Activated CD4-positive, alpha-beta T cell treated with anti-CD3 and anti-CD28 coated beads, Interleukin-2, amount 10 ng/mL, durations not matched to agents 7 days and 5 days (primary cell): ENCODE measurements at regions of chr6 and their contacts with region 1.

Region 1: DNA sequence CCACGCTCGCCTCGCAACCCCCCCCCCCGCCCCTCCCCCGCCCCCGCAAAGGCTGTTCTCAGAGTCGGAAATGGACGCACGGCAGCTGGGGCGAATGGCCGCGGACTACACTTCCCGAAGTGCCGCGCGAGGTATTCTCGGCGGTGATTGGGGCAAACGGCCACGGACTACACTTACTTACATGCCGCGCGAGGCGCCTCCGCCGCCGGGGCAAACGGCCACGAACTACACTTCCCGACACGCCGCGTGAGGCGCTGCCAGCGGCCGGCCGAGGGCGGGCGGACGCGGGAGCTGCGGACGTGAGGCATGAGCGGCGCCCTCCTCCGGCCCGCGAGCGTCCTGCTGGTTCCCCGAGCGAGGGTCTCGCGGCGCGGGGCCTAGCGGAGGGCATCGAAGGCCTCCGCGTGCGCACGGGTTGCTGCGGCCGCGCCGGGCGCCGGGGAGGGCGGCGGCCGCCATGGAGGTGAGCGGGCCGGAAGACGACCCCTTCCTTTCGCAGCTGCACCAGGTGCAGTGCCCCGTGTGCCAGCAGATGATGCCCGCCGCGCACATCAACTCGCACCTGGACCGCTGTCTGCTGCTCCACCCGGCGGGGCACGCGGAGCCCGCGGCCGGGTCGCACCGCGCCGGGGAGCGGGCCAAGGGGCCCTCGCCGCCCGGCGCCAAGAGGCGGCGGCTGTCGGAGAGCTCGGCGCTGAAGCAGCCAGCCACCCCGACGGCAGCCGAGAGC is at the start of gene WRNIP1:
- DNase-seq: peak; percentile 98
- H3K4me3 Mint-ChIP-seq: peak within 1 kb of the TSS; percentile 94
- H3K27ac Mint-ChIP-seq: peak within 1 kb of the TSS; percentile 96
- H3K4me1 Mint-ChIP-seq: peaks cover 56% of the 10 kb centered on the region
- H3K27me3 Mint-ChIP-seq: no peaks in the 10 kb centered on the region
- total RNA-seq, gene WRNIP1: 48.0 to 50.5 TPM

Region 2: GRCh38 chr6:2738373-2738979 is 26.9 kb before region 1 on chr6:
- CTCF ChIA-PET with region 1: interaction called, 22 read pairs
- POLR2A ChIA-PET with region 1: no interaction called
- DNase-seq: peak; percentile 63
- H3K4me3 Mint-ChIP-seq: no peak overlapping the region
- H3K27ac Mint-ChIP-seq: no peak overlapping the region
- H3K4me1 Mint-ChIP-seq: peaks cover under 1% of the 10 kb centered on the region
- H3K27me3 Mint-ChIP-seq: peaks cover 3% of the 10 kb centered on the region

Region 3: DNA sequence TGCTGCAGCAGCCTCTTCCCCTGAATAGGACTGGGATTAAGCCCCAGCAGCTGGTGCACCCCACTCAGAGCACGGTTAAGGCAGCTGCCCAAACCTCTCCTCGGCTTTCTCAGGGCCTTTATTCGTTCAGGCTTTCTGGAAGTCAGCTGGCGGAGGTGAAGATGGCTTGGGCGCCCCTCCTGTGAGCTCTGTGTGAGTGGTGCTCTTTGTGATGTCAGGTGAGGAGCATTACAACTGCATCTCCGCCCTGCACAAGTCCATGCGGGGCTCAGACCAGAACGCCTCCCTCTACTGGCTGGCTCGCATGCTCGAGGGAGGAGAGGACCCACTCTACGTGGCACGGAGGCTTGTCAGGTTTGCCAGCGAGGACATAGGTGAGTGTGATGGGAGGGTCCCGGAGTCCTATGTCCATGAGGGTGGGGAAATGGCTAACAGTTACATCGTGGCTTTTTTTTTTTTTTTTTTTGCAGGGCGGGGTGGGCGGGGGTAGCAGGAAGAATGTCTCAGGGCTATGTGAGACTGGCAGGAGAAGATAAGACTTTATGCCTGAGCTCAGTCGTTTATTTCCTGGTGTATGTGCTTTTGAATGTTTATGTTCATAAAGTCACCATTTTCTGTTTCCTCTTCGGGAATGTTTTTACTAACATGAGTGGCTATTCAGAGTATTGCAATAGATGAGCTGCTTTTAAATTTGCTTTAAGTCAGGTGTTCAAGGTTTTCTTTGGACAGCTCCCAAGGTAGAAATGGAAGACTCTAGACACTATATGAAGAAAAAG is 18.0 kb after region 1 on chr6:
- CTCF ChIA-PET with region 1: interaction called, 12 read pairs
- POLR2A ChIA-PET with region 1: no interaction called
- DNase-seq: no peak
- H3K4me3 Mint-ChIP-seq: no peak overlapping the region
- H3K27ac Mint-ChIP-seq: no peak overlapping the region
- H3K4me1 Mint-ChIP-seq: peaks cover 11% of the 10 kb centered on the region
- H3K27me3 Mint-ChIP-seq: no peaks in the 10 kb centered on the region

Region 4: GRCh38 chr6:3068329-3069214 is 303.2 kb after region 1 on chr6 and contains the start of gene RIPK1:
- CTCF ChIA-PET with region 1: interaction called, 6 read pairs
- POLR2A ChIA-PET with region 1: interaction called, 16 read pairs
- DNase-seq: peak; percentile 94
- H3K4me3 Mint-ChIP-seq: peak within 1 kb of the TSS; percentile 98
- H3K27ac Mint-ChIP-seq: peak within 1 kb of the TSS; percentile 99
- H3K4me1 Mint-ChIP-seq: peaks cover 70% of the 10 kb centered on the region
- H3K27me3 Mint-ChIP-seq: no peaks in the 10 kb centered on the region
- total RNA-seq, gene RIPK1: 35.8 to 38.9 TPM